MCF 10A (cell line): ENCODE measurements at regions of chr16 and their contacts with region 1.

Region 1: GRCh38 chr16:76182041-76182635 is 95.1 kb upstream of the CNTNAP4 start:
- DNase-seq: peak; percentile 5
- H3K4me3 Mint-ChIP-seq: no peak overlapping the region
- H3K27ac Mint-ChIP-seq: no peak overlapping the region
- H3K4me1 Mint-ChIP-seq: peaks cover 6% of the 10 kb centered on the region
- H3K27me3 Mint-ChIP-seq: no peaks in the 10 kb centered on the region
- CTCF ChIP-seq: no peak

Region 2: GRCh38 chr16:75385507-75386152 is 796.5 kb before region 1 on chr16:
- CTCF ChIA-PET with region 1: no interaction called
- POLR2A ChIA-PET with region 1: no interaction called
- intact Hi-C with region 1: no loop called
- DNase-seq: peak; percentile 85
- H3K4me3 Mint-ChIP-seq: no peak overlapping the region
- H3K27ac Mint-ChIP-seq: no peak overlapping the region
- H3K4me1 Mint-ChIP-seq: peaks cover 12% of the 10 kb centered on the region
- H3K27me3 Mint-ChIP-seq: no peaks in the 10 kb centered on the region
- CTCF ChIP-seq: peak; percentile 66

Region 3: DNA sequence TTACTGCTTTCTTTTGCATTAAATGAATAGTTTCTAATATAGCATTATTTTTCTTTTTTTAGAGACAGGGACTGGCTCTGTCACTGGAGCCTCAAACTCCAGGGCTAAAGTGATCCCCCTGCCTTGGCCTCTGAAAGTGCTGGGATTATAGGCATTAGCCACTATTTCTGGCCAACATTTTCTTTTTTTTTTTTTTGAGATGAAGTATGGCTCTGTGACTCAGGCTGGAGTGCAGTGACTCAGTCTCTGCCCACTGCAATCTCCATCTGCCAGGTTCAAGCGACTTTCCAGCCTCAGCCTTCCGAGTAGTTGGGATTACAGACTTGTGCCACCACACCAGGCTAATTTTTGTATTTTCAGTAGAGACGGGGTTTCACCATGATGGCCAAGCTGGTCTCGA is 478.8 kb before region 1 on chr16:
- CTCF ChIA-PET with region 1: no interaction called
- POLR2A ChIA-PET with region 1: no interaction called
- intact Hi-C with region 1: no loop called
- DNase-seq: peak; percentile 16
- H3K4me3 Mint-ChIP-seq: no peak overlapping the region
- H3K27ac Mint-ChIP-seq: no peak overlapping the region
- H3K4me1 Mint-ChIP-seq: peaks cover 5% of the 10 kb centered on the region
- H3K27me3 Mint-ChIP-seq: no peaks in the 10 kb centered on the region
- CTCF ChIP-seq: no peak

Region 4: DNA sequence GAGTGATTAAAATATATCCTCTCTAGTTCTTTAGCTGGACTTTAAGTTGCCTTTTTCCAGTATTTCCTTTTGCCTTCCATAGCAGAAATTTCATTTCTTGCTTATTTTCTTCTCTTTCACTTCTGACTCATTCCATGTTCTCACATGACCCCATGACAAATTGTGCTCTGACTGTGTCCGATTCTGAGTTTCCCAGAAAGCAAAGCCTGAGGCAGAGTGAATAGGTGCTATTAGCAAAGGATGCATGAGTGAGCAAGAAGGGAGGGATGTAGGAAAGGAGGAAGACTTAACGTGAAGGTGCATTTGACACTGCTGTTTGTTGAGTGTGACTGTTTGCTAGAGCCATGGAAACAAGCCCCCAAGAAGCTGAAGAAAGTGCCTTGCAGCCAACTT is 12.5 kb after region 1 on chr16:
- CTCF ChIA-PET with region 1: no interaction called
- POLR2A ChIA-PET with region 1: interaction called, 12 read pairs
- intact Hi-C with region 1: no loop called
- DNase-seq: peak; percentile 74
- H3K4me3 Mint-ChIP-seq: peak overlapping the region; percentile 64
- H3K27ac Mint-ChIP-seq: peak overlapping the region; percentile 93
- H3K4me1 Mint-ChIP-seq: peaks cover 20% of the 10 kb centered on the region
- H3K27me3 Mint-ChIP-seq: no peaks in the 10 kb centered on the region
- CTCF ChIP-seq: no peak

Region 5: GRCh38 chr16:76241755-76242154 is 59.6 kb after region 1 on chr16:
- CTCF ChIA-PET with region 1: no interaction called
- POLR2A ChIA-PET with region 1: no interaction called
- intact Hi-C with region 1: no loop called
- DNase-seq: no peak
- H3K4me3 Mint-ChIP-seq: no peak overlapping the region
- H3K27ac Mint-ChIP-seq: no peak overlapping the region
- H3K4me1 Mint-ChIP-seq: peaks cover 5% of the 10 kb centered on the region
- H3K27me3 Mint-ChIP-seq: no peaks in the 10 kb centered on the region
- CTCF ChIP-seq: no peak